Ascending aorta (tissue), 2 donors: ENCODE measurements at regions of chr15 and their contacts with region 1.

Region 1: DNA sequence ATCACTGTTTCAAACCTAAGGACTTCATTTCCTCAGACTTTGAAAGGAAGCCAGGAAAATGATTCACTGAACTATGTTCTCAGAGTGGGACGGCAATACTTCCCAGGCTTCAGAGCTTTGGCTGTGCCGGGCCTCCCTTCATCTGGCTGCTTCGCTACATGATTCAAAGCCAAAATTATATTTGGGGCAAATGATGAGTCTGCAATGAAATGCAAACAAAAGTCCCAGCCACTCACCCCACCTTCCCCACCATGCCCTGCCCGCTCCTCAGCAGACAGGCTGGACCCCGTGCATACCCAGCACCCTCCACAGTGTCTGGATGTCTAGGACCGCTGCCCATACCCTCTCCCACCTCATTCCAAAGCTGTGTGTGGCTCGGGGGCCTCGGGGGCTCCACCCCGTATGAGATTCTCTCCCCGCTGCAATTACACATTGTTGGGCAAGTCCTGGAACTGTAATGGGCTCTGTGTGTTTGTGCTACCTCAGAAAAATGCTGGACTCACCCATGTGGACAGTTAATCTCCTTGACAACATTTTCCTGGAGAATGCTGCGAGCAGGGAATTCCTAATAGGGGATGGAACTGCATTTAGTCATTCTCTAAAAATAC is 32.2 kb downstream of the ATP10A start:
- DNase-seq: peak; percentile 78 to 96
- H3K4me3 ChIP-seq: peak overlapping the region in 1 of 2 donors; percentile 1
- H3K27ac ChIP-seq: peak overlapping the region; percentile 95 to 98
- H3K4me1 ChIP-seq: peaks cover 15 to 29% of the 10 kb centered on the region in 2 donors
- H3K27me3 ChIP-seq: no peaks in the 10 kb centered on the region
- CTCF ChIP-seq: no peak

Region 2: GRCh38 chr15:25790000-25790660 is 40.8 kb before region 1 on chr15:
- intact Hi-C with region 1: loop called (anchors 2 kb)
- DNase-seq: peak in 1 of 2 donors; percentile 84
- H3K4me3 ChIP-seq: no peak overlapping the region
- H3K27ac ChIP-seq: peak overlapping the region; percentile 64 to 71
- H3K4me1 ChIP-seq: peaks cover 8 to 41% of the 10 kb centered on the region in 2 donors
- H3K27me3 ChIP-seq: no peaks in the 10 kb centered on the region
- CTCF ChIP-seq: no peak

Region 3: GRCh38 chr15:25850154-25851111 is 19.5 kb after region 1 on chr15:
- intact Hi-C with region 1: loop called (anchors 1 kb)
- DNase-seq: peak; percentile 66 to 95
- H3K4me3 ChIP-seq: peak overlapping the region; percentile 47 to 62
- H3K27ac ChIP-seq: peak overlapping the region; percentile 96 to 97
- H3K4me1 ChIP-seq: peaks cover 9 to 78% of the 10 kb centered on the region in 2 donors
- H3K27me3 ChIP-seq: no peaks in the 10 kb centered on the region
- CTCF ChIP-seq: no peak

Region 4: GRCh38 chr15:25905140-25905539 is 74.2 kb after region 1 on chr15:
- intact Hi-C with region 1: no loop called
- DNase-seq: peak in 1 of 2 donors; percentile 78
- H3K4me3 ChIP-seq: no peak overlapping the region
- H3K27ac ChIP-seq: no peak overlapping the region
- H3K4me1 ChIP-seq: no peaks in the 10 kb centered on the region
- H3K27me3 ChIP-seq: no peaks in the 10 kb centered on the region
- CTCF ChIP-seq: no peak

Region 5: GRCh38 chr15:26146199-26146598 is 315.3 kb after region 1 on chr15:
- intact Hi-C with region 1: no loop called
- DNase-seq: no peak
- H3K4me3 ChIP-seq: no peak overlapping the region
- H3K27ac ChIP-seq: no peak overlapping the region
- H3K4me1 ChIP-seq: no peaks in the 10 kb centered on the region
- H3K27me3 ChIP-seq: no peaks in the 10 kb centered on the region
- CTCF ChIP-seq: no peak